ENCODE measurements at regions of chr15 and their contacts with region 1.

Region 1: DNA sequence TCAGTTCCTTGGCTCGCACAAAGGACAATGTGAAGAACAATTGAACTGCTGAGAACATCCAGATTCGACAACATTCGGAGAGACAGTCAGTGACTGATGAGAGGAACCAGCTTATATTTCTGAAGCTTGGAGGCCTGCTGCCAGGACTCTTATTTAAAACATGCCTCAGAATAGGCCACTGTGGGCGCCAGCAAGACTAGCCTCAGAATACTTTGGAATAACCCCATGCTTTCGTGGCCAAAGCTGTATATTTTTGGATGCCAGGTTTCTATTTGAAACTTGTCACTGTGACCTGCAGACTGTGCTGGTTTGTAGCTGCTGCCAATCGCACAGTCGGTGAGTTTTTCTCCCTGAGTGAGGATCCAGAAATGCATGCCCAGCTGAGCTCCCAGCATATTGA is 129.9 kb upstream of the UBE3A start:
- DNase-seq: no peak
- ATAC-seq: peak; percentile 82

Region 2: GRCh38 chr15:25684521-25685431 is 116.0 kb after region 1 on chr15:
- intact Hi-C with region 1: loop called (anchors 5 kb)
- DNase-seq: no peak
- ATAC-seq: peak; percentile 70

Measured in Right ventricle myocardium inferior (tissue), 1 donor.